B cell (primary cell): ENCODE measurements at regions of chr9 and their contacts with region 1.

Region 1: DNA sequence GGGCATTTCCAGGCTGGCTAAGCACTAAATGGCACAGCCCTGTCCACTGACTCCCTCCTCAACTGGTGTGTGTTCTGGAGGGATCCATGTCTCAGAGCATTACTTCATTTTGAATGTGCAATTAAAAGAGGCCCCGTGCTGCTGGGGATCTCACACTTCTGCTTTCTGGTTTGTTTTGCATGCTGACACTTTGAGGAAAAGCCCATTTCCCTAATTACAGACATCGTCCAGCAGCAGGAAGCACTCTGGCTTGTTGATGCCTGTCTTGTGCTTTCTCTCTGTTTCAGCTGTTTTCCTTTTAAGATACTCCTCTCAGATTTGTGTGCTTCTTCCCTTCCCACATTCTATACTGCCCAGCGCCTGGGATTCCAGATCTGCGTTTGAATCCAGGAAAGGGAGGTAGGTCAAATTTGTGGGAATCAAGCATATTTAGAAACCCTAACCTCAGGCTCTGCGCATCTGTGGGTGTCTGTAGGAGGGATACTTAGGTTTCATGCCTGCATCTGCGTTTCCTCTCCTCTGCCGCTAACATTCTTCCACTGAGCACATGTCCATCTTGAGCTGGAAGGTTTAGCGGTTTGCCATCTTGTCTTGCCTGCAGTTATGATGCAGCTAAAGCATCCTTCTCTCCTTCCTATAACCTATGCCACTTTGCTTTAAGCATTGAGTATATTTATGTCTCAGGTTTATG is 25.7 kb downstream of the SYK start:
- DNase-seq: peak; percentile 86
- ATAC-seq: peak; percentile 68
- H3K4me3 ChIP-seq: peak overlapping the region; percentile 65 to 97 (median 88)
- H3K4me3 Mint-ChIP-seq: peak overlapping the region; percentile 88
- H3K27ac ChIP-seq: peak overlapping the region; percentile 81 to 91
- H3K27ac Mint-ChIP-seq: peak overlapping the region; percentile 86
- H3K4me1 ChIP-seq: peaks cover 72 to 75% of the 10 kb centered on the region in 2 donors
- H3K4me1 Mint-ChIP-seq: peaks cover 89% of the 10 kb centered on the region
- H3K27me3 ChIP-seq: no peaks in the 10 kb centered on the region
- H3K27me3 Mint-ChIP-seq: no peaks in the 10 kb centered on the region
- CTCF ChIP-seq: no peak

Region 2: GRCh38 chr9:90787771-90788460 is 39.4 kb before region 1 on chr9:
- CTCF ChIA-PET with region 1: interaction called, 11 read pairs
- POLR2A ChIA-PET with region 1: no interaction called
- intact Hi-C with region 1: no loop called
- DNase-seq: no peak
- ATAC-seq: no peak
- H3K4me3 ChIP-seq: no peak overlapping the region
- H3K4me3 Mint-ChIP-seq: no peak overlapping the region
- H3K27ac ChIP-seq: no peak overlapping the region
- H3K27ac Mint-ChIP-seq: no peak overlapping the region
- H3K4me1 ChIP-seq: peaks cover 17 to 24% of the 10 kb centered on the region in 2 donors
- H3K4me1 Mint-ChIP-seq: peaks cover 37% of the 10 kb centered on the region
- H3K27me3 ChIP-seq: no peaks in the 10 kb centered on the region
- H3K27me3 Mint-ChIP-seq: no peaks in the 10 kb centered on the region
- CTCF ChIP-seq: no peak

Region 3: GRCh38 chr9:90808890-90809685 is 18.2 kb before region 1 on chr9:
- CTCF ChIA-PET with region 1: interaction called, 44 read pairs
- POLR2A ChIA-PET with region 1: interaction called, 7 read pairs
- intact Hi-C with region 1: no loop called
- DNase-seq: peak; percentile 47
- ATAC-seq: peak; percentile 54
- H3K4me3 ChIP-seq: peak overlapping the region in 1 of 5 experiments; percentile 22
- H3K4me3 Mint-ChIP-seq: peak overlapping the region; percentile 89
- H3K27ac ChIP-seq: peak overlapping the region; percentile 42 to 93
- H3K27ac Mint-ChIP-seq: peak overlapping the region; percentile 98
- H3K4me1 ChIP-seq: peaks cover 87 to 93% of the 10 kb centered on the region in 2 donors
- H3K4me1 Mint-ChIP-seq: peaks cover 95% of the 10 kb centered on the region
- H3K27me3 ChIP-seq: no peaks in the 10 kb centered on the region
- H3K27me3 Mint-ChIP-seq: no peaks in the 10 kb centered on the region
- CTCF ChIP-seq: no peak

Region 4: DNA sequence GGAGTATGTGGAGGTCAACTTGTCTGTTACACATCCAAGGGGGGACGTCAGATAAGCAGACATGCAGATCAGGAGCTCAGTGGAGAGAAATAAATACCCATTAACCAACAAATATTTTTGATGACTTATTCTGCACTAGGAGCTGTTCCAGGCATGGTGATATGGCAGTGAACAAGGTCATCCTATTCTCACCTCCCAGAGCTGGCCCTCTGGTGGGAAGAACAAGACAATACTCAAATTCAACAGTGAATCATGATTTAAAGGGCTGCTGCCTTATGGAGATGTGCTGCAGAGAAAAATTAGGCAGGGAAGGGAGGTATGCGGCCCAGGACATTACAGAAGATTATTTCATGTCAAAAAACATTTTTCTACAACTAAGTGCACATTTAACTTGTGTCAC is 10.8 kb after region 1 on chr9:
- CTCF ChIA-PET with region 1: interaction called, 13 read pairs
- POLR2A ChIA-PET with region 1: interaction called, 6 read pairs
- intact Hi-C with region 1: loop called (anchors 2 kb)
- DNase-seq: no peak
- ATAC-seq: no peak
- H3K4me3 ChIP-seq: no peak overlapping the region
- H3K4me3 Mint-ChIP-seq: peak overlapping the region; percentile 47
- H3K27ac ChIP-seq: peak overlapping the region in 1 of 2 donors; percentile 41
- H3K27ac Mint-ChIP-seq: peak overlapping the region; percentile 87
- H3K4me1 ChIP-seq: peaks cover 92 to 96% of the 10 kb centered on the region in 2 donors
- H3K4me1 Mint-ChIP-seq: peaks cover 68% of the 10 kb centered on the region
- H3K27me3 ChIP-seq: no peaks in the 10 kb centered on the region
- H3K27me3 Mint-ChIP-seq: no peaks in the 10 kb centered on the region
- CTCF ChIP-seq: peak; percentile 29

Region 5: DNA sequence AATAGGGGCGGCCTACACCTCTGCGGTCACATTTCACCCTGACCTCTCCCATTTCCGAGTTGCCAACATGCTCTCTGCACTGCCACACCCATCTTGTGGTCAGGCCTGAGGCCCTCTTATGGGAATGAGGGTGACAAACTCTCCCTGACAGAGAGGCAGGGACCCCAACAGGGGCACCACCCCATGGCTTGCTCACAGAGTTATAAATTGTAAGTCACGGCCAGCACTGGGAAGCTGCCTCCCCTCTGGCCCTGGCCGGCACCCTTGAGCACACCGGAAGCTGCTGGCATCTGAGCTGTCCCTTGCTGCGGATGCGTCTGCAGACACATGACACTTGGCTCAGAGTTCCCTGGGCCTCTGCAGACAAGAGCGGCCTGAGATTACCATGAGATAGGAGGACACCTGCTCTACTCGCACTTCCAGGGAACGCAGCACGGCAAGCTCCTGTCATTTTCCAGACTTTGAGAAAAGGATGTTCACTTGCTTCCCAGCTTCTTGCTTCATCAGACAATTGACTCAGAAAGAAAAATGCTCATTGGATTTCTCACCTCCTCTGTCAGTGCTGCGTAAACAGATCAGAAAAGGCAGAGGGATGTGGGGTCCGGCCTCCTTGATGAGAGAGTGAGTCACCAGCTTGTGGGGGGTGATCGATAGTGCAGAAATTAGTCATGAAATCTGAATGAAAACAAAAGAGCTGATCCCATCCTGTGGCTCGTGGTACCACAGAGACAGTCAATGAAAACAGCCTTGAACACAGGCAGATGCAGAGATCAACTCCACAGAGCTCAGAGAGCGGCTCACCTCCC is 244.1 kb after region 1 on chr9:
- CTCF ChIA-PET with region 1: no interaction called
- POLR2A ChIA-PET with region 1: no interaction called
- intact Hi-C with region 1: no loop called
- DNase-seq: no peak
- ATAC-seq: no peak
- H3K4me3 ChIP-seq: no peak overlapping the region
- H3K4me3 Mint-ChIP-seq: no peak overlapping the region
- H3K27ac ChIP-seq: no peak overlapping the region
- H3K27ac Mint-ChIP-seq: no peak overlapping the region
- H3K4me1 ChIP-seq: no peaks in the 10 kb centered on the region
- H3K4me1 Mint-ChIP-seq: no peaks in the 10 kb centered on the region
- H3K27me3 ChIP-seq: no peaks in the 10 kb centered on the region
- H3K27me3 Mint-ChIP-seq: peaks cover 5% of the 10 kb centered on the region
- CTCF ChIP-seq: no peak